ENCODE measurements at regions of chr2 and their contacts with region 1.

Region 1: GRCh38 chr2:174341286-174341994 is 6.7 kb downstream of the SP9 start:
- DNase-seq: peak; percentile 95
- ATAC-seq: peak; percentile 85

Region 2: GRCh38 chr2:173571021-173571882 is 770.2 kb before region 1 on chr2:
- intact Hi-C with region 1: loop called (anchors 5 kb)
- DNase-seq: no peak
- ATAC-seq: no peak

Region 3: DNA sequence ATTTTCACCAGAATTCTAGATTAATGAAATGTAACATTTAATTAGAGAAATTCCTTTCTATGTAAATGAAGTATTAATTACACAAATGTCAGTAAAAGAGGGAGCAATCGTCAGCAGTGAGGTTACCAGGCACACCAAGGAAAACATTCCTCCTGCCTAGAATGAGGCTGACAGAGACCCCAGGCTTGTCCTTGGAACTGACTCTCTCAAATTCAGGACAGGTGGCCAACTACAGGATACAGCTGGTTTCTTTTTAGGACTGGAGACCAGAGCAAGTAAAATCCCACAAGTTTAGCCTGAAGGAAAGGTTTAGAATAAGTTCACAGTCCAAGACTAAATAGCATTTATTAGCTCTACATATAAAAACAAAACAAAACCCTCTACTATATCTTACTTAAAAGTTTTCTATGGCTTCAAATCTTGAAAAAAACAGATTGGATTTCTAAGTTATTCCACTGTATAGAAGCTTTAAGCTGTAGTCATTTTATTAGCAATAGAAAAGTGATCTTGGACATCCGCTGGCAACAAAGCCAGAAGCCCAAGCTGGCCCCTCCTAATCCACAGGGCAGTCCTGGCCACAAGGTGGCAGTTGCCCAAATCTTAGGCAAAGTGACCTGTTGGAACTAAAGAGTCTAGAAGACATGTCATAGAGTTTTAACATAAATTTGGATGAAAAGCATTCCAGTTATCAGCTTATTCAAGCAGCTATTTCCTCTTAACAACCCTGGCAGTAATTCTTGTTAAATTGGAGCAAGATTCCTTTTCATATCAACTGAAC is 457.2 kb before region 1 on chr2:
- intact Hi-C with region 1: loop called (anchors 10 kb)
- DNase-seq: no peak
- ATAC-seq: peak; percentile 69

Region 4: DNA sequence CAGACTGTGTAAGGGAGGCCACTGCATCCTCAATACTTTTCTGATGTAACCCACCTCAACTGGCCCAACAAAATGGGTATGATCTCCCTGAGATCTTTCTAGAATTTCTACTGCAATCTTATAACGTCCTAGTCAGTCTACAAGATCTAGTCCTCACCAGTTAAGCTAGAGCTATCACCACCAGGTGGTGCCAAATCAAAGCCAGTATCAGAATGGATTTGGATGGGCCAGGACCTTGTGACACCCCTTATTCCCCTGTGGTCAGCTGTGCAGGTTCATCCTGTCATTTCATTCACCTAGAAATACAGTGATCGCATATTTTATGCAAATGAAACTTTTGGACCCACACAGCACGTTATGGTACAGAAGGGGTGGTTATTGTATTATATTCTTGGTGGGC is 183.4 kb before region 1 on chr2:
- intact Hi-C with region 1: loop called (anchors 5 kb)
- DNase-seq: no peak
- ATAC-seq: peak; percentile 59

Region 5: GRCh38 chr2:174477759-174478158 is 136.3 kb after region 1 on chr2:
- intact Hi-C with region 1: no loop called
- DNase-seq: no peak
- ATAC-seq: no peak

Measured in Right ventricle myocardium inferior (tissue), 1 donor.